Activated B cell treated with CpG ODN at 0.5 μM for 24 hours (primary cell): ENCODE measurements at regions of chr9 and their contacts with region 1.

Region 1: GRCh38 chr9:37209431-37210386 is 89.3 kb downstream of the ZCCHC7 start:
- DNase-seq: no peak
- ATAC-seq: peak; percentile 35
- H3K4me3 Mint-ChIP-seq: peak overlapping the region; percentile 63
- H3K27ac Mint-ChIP-seq: peak overlapping the region; percentile 88
- H3K4me1 Mint-ChIP-seq: peaks cover 81% of the 10 kb centered on the region
- H3K27me3 Mint-ChIP-seq: no peaks in the 10 kb centered on the region
- CTCF ChIP-seq: no peak

Region 2: GRCh38 chr9:37229882-37230487 is 20.3 kb after region 1 on chr9:
- CTCF ChIA-PET with region 1: interaction called, 3 read pairs
- POLR2A ChIA-PET with region 1: interaction called, 4 read pairs
- intact Hi-C with region 1: loop called (anchors 2 kb)
- DNase-seq: no peak
- ATAC-seq: no peak
- H3K4me3 Mint-ChIP-seq: no peak overlapping the region
- H3K27ac Mint-ChIP-seq: no peak overlapping the region
- H3K4me1 Mint-ChIP-seq: peaks cover 47% of the 10 kb centered on the region
- H3K27me3 Mint-ChIP-seq: no peaks in the 10 kb centered on the region
- CTCF ChIP-seq: no peak